Gastrocnemius medialis (tissue), 4 donors: ENCODE measurements at regions of chr10 and their contacts with region 1.

Region 1: DNA sequence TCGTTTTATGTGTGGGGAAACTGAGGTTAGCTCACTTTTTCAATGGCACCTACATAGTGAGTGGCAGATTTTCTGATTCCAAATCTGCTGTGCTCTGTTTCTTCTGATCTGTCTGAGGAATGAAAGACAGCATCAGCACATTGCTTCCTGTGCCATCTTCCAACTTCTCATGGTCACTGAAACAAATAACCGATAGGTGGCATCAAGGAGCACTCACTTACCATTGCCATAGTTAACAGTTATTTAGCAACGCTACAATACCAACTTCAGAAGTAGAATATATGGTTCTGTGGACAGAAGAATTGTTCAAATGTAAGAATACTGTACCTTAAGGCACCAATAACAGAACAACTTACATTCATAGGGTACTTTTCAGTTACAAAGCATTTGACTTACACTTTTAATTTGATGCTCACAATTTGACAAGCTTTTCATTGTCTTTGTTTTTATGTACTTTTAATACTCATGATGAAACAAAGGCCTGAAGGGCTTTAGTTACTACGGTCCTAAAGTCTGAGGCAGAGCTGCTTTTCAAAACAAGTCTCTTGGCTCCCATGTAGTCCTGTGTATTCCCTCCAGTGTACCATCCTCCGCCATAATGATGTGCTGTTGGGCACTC is 228.9 kb upstream of the TCF7L2 start:
- DNase-seq: no peak
- ATAC-seq: peak in 1 of 2 donors; percentile 76
- H3K4me3 ChIP-seq: no peak overlapping the region
- H3K27ac ChIP-seq: no peak overlapping the region
- H3K4me1 ChIP-seq: no peaks in the 10 kb centered on the region
- H3K27me3 ChIP-seq: no peaks in the 10 kb centered on the region
- CTCF ChIP-seq: peak; percentile 24 to 62 (median 48)
- POLR2A ChIP-seq: no peak

Region 2: GRCh38 chr10:112183329-112184051 is 537.7 kb before region 1 on chr10 and contains the start of gene GPAM:
- in situ Hi-C with region 1: no loop called
- intact Hi-C with region 1: no loop called
- DNase-seq: peak; percentile 80 to 93
- ATAC-seq: peak; percentile 95 to 97
- H3K4me3 ChIP-seq: peak within 1 kb of the TSS; percentile 88 to 94 (median 91)
- H3K27ac ChIP-seq: peak within 1 kb of the TSS; percentile 86 to 93 (median 90)
- H3K4me1 ChIP-seq: peaks cover 19 to 27% of the 10 kb centered on the region in 2 donors
- H3K27me3 ChIP-seq: no peaks in the 10 kb centered on the region
- CTCF ChIP-seq: peak in 2 of 5 experiments; percentile 43 to 46
- POLR2A ChIP-seq: peak; percentile 63
- total RNA-seq, gene GPAM: 4.0 to 9.0 (median 4.6) TPM

Region 3: GRCh38 chr10:113379091-113379490 is 657.9 kb after region 1 on chr10:
- in situ Hi-C with region 1: loop called in 2 of 4 experiments (anchors 10 to 25 kb)
- intact Hi-C with region 1: loop called (anchors 10 kb)
- DNase-seq: no peak
- ATAC-seq: no peak
- H3K4me3 ChIP-seq: no peak overlapping the region
- H3K27ac ChIP-seq: no peak overlapping the region
- H3K4me1 ChIP-seq: peaks cover 0 to 4% of the 10 kb centered on the region in 2 donors
- H3K27me3 ChIP-seq: no peaks in the 10 kb centered on the region
- CTCF ChIP-seq: no peak
- POLR2A ChIP-seq: no peak

Region 4: GRCh38 chr10:113385021-113385999 is 664.1 kb after region 1 on chr10:
- in situ Hi-C with region 1: loop called in 1 of 4 experiments (anchors 25 kb)
- intact Hi-C with region 1: loop called (anchors 10 kb)
- DNase-seq: peak; percentile 61 to 73
- ATAC-seq: peak; percentile 93 to 96
- H3K4me3 ChIP-seq: peak overlapping the region in 1 of 4 donors; percentile 35
- H3K27ac ChIP-seq: peak overlapping the region; percentile 40 to 57 (median 48)
- H3K4me1 ChIP-seq: peaks cover 0 to 4% of the 10 kb centered on the region in 2 donors
- H3K27me3 ChIP-seq: no peaks in the 10 kb centered on the region
- CTCF ChIP-seq: peak; percentile 45 to 80 (median 68)
- POLR2A ChIP-seq: no peak